Mammary epithelial cell (primary cell): ENCODE measurements at regions of chr7 and their contacts with region 1.

Region 1: GRCh38 chr7:23570592-23571200 is 26.5 kb upstream of the CCDC126 start:
- DNase-seq: peak; percentile 62
- H3K4me3 ChIP-seq: no peak overlapping the region
- H3K27ac ChIP-seq: no peak overlapping the region
- H3K4me1 ChIP-seq: no peaks in the 10 kb centered on the region
- H3K27me3 ChIP-seq: no peaks in the 10 kb centered on the region
- CTCF ChIP-seq: peak; percentile 82 to 87

Region 2: GRCh38 chr7:23696916-23697441 is 126.3 kb after region 1 on chr7:
- CTCF ChIA-PET with region 1: interaction called, 8 read pairs
- dilution Hi-C with region 1: no loop called
- in situ Hi-C with region 1: loop called in 1 of 2 experiments (anchors 10 kb)
- intact Hi-C with region 1: loop called (anchors 5 kb)
- DNase-seq: peak; percentile 29
- H3K4me3 ChIP-seq: no peak overlapping the region
- H3K27ac ChIP-seq: no peak overlapping the region
- H3K4me1 ChIP-seq: peaks cover 8% of the 10 kb centered on the region
- H3K27me3 ChIP-seq: no peaks in the 10 kb centered on the region
- CTCF ChIP-seq: peak; percentile 70 to 82

Region 3: GRCh38 chr7:23863209-23863798 is 292.6 kb after region 1 on chr7:
- CTCF ChIA-PET with region 1: no interaction called
- dilution Hi-C with region 1: no loop called
- in situ Hi-C with region 1: no loop called
- intact Hi-C with region 1: loop called (anchors 2 kb)
- DNase-seq: peak; percentile 20
- H3K4me3 ChIP-seq: no peak overlapping the region
- H3K27ac ChIP-seq: no peak overlapping the region
- H3K4me1 ChIP-seq: no peaks in the 10 kb centered on the region
- H3K27me3 ChIP-seq: no peaks in the 10 kb centered on the region
- CTCF ChIP-seq: peak; percentile 73 to 94

Region 4: DNA sequence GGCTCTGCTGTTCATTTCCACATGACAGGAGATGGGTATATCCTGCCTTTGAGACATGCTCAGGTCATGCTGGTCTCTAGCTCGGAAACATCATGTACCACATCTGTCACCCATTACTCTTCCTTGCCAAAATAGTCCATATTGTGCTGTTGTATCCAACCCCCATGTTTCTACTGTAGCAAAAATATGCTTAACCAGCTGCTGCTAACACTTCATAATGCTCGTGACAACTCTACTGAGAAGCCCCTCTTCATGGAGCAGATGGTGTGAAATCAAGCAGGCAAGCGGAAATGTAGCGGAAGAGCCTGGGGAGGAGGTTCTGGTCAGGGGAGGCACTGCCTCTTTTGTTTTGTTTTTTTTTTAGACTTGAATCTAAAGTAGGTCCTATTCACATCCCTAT is 796.2 kb after region 1 on chr7:
- CTCF ChIA-PET with region 1: no interaction called
- dilution Hi-C with region 1: no loop called
- in situ Hi-C with region 1: loop called in 1 of 2 experiments (anchors 25 kb)
- intact Hi-C with region 1: no loop called
- DNase-seq: no peak
- H3K4me3 ChIP-seq: no peak overlapping the region
- H3K27ac ChIP-seq: no peak overlapping the region
- H3K4me1 ChIP-seq: no peaks in the 10 kb centered on the region
- H3K27me3 ChIP-seq: no peaks in the 10 kb centered on the region
- CTCF ChIP-seq: no peak

Region 5: GRCh38 chr7:25098096-25099046 is 1527.7 kb after region 1 on chr7:
- CTCF ChIA-PET with region 1: no interaction called
- dilution Hi-C with region 1: no loop called
- in situ Hi-C with region 1: no loop called
- intact Hi-C with region 1: loop called (anchors 5 kb)
- DNase-seq: peak; percentile 31
- H3K4me3 ChIP-seq: no peak overlapping the region
- H3K27ac ChIP-seq: no peak overlapping the region
- H3K4me1 ChIP-seq: peaks cover 3% of the 10 kb centered on the region
- H3K27me3 ChIP-seq: no peaks in the 10 kb centered on the region
- CTCF ChIP-seq: peak; percentile 94 to 98